RWPE1 (cell line): ENCODE measurements at regions of chr11 and their contacts with region 1.

Region 1: GRCh38 chr11:128630367-128631230 is 43.2 kb upstream of the ETS1 start:
- DNase-seq: peak; percentile 81
- H3K27ac ChIP-seq: no peak overlapping the region
- CTCF ChIP-seq: peak; percentile 84

Region 2: DNA sequence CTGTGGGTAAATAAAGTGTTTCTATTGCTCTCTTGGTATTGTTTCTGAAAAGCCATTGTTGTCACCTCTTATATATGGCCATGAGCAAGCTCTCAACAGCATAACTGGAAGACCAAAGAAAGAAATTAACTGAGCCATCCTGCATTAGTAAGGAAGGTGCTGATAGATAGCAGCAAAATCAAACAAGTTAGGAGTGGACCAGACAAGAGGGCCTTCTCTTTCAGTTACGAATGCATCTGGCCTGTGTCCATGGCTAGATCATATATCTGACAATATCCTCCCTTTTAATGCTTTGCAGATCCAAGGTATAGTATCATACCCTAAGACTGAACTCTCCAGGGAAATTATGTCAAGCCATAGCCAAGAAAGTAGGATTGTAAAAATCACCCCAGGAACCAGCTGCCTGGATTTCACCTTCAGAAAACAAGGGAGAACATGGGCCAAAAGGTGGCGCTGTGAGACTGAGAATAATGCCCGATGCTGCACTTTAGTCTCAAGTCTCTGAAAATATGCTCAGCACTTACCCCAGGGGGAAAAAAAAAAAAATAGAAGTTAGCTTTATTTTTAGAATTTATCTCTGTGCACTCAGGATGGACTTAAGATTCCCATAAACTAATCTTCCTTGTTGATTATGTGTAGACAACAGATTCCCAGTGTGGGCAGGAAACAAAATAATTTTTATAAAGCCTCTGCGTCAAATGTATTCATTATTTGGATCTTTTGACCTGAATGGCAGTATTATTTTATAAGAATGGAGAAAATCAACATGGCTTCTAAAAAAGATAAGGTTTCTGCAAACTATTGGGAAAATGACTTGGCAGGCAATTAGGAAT is 458.3 kb before region 1 on chr11:
- CTCF ChIA-PET with region 1: interaction called, 28 read pairs
- POLR2A ChIA-PET with region 1: no interaction called
- DNase-seq: peak; percentile 85
- H3K27ac ChIP-seq: peak overlapping the region; percentile 56; the same call in 1 of the 2 replicates
- CTCF ChIP-seq: peak; percentile 76

Region 3: GRCh38 chr11:128593281-128593680 is 37.3 kb before region 1 on chr11:
- CTCF ChIA-PET with region 1: no interaction called
- POLR2A ChIA-PET with region 1: no interaction called
- DNase-seq: no peak
- H3K27ac ChIP-seq: no peak overlapping the region
- CTCF ChIP-seq: no peak